ENCODE measurements at regions of chr1 and their contacts with region 1.

Region 1: GRCh38 chr1:40338745-40339424 is 21.8 kb upstream of the COL9A2 start:
- DNase-seq: peak; percentile 92
- ATAC-seq: peak; percentile 91
- H3K4me3 Mint-ChIP-seq: peak overlapping the region; percentile 32
- H3K27ac Mint-ChIP-seq: peak overlapping the region; percentile 59
- H3K4me1 Mint-ChIP-seq: peaks cover 45% of the 10 kb centered on the region
- H3K27me3 Mint-ChIP-seq: no peaks in the 10 kb centered on the region

Region 2: DNA sequence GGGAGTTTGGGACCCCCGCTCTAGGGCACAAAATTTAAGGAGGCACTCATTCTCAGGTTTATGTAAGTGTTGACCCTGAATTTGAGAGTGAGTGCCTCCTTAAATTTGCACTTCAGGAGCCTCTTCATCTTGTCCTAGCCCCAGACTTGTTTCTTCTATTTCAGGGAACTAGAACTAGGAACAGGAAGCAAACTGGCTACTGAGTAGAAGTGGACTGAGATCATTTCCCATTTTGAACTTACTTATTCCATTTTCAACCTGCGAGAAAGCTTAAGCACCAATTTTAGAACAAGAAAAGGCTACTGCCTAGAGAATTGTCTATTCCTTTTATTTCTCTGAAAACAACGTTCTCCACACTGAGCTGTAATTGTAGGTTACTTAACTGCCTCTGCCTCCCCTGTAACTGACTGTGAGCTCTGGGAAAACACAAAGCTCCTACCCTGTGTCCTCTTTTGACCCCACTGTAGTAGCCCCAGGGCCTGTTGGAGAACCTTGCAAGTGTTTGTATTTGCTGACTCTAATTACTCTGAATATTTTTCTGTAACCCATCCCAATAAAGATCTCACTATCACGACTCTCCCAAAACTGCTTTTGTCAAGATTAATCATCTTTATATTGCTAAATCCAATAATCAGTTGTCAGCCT is 244.3 kb before region 1 on chr1:
- CTCF ChIA-PET with region 1: interaction called, 11 read pairs
- POLR2A ChIA-PET with region 1: no interaction called
- DNase-seq: no peak
- ATAC-seq: no peak
- H3K4me3 Mint-ChIP-seq: no peak overlapping the region
- H3K27ac Mint-ChIP-seq: no peak overlapping the region
- H3K4me1 Mint-ChIP-seq: peaks cover 35% of the 10 kb centered on the region
- H3K27me3 Mint-ChIP-seq: peaks cover 2% of the 10 kb centered on the region

Region 3: GRCh38 chr1:40161125-40161887 is 177.6 kb before region 1 on chr1 and contains the start of gene RLF:
- CTCF ChIA-PET with region 1: interaction called, 262 read pairs
- POLR2A ChIA-PET with region 1: interaction called, 4 read pairs
- DNase-seq: peak; percentile 96
- ATAC-seq: peak; percentile 96
- H3K4me3 Mint-ChIP-seq: no peak within 1 kb of the TSS
- H3K27ac Mint-ChIP-seq: peak within 1 kb of the TSS; percentile 36
- H3K4me1 Mint-ChIP-seq: peaks cover 15% of the 10 kb centered on the region
- H3K27me3 Mint-ChIP-seq: no peaks in the 10 kb centered on the region
- total RNA-seq, gene RLF: 20.4 to 22.3 TPM

Region 4: DNA sequence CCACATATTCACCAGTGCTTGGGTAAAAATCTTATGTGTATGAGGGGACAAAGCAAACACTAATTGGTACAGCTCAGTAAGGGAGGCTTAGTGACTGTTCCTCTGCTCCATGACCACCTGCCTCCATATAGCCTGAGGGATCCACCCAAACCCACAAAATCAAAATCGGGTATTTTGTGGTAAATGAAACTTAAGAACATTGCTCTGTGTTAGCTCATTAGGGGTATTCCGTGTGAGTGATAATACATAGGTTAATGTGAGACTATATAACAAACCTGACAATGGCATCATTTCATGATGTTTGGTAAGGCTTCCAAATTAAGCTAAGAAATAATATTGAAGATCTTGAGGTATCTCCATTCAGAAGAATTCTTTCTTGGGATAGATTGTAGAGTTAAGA is 47.6 kb before region 1 on chr1:
- CTCF ChIA-PET with region 1: interaction called, 27 read pairs
- POLR2A ChIA-PET with region 1: no interaction called
- DNase-seq: no peak
- ATAC-seq: no peak
- H3K4me3 Mint-ChIP-seq: no peak overlapping the region
- H3K27ac Mint-ChIP-seq: no peak overlapping the region
- H3K4me1 Mint-ChIP-seq: peaks cover 6% of the 10 kb centered on the region
- H3K27me3 Mint-ChIP-seq: no peaks in the 10 kb centered on the region

Region 5: DNA sequence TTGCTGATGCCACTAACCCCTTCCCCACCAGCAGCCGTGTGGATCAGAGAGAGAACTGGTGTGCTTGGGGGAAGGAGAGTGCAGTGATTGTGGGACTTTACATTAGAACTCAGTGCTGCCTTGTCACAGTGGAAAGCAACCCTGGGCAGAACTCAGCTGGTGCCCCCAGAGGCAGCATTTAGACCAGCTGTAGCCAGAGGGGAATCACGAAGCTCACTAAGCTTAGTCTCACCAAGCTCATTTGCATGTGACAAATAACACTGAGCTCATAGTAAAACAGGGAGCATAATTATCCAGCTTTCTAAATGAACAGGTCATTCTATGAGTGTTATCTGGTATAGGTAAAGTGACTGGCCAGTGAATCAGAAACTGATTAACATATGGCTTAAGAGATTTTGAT is 24.8 kb after region 1 on chr1:
- CTCF ChIA-PET with region 1: interaction called, 26 read pairs
- POLR2A ChIA-PET with region 1: no interaction called
- DNase-seq: no peak
- ATAC-seq: no peak
- H3K4me3 Mint-ChIP-seq: no peak overlapping the region
- H3K27ac Mint-ChIP-seq: no peak overlapping the region
- H3K4me1 Mint-ChIP-seq: peaks cover 5% of the 10 kb centered on the region
- H3K27me3 Mint-ChIP-seq: no peaks in the 10 kb centered on the region

Region 6: DNA sequence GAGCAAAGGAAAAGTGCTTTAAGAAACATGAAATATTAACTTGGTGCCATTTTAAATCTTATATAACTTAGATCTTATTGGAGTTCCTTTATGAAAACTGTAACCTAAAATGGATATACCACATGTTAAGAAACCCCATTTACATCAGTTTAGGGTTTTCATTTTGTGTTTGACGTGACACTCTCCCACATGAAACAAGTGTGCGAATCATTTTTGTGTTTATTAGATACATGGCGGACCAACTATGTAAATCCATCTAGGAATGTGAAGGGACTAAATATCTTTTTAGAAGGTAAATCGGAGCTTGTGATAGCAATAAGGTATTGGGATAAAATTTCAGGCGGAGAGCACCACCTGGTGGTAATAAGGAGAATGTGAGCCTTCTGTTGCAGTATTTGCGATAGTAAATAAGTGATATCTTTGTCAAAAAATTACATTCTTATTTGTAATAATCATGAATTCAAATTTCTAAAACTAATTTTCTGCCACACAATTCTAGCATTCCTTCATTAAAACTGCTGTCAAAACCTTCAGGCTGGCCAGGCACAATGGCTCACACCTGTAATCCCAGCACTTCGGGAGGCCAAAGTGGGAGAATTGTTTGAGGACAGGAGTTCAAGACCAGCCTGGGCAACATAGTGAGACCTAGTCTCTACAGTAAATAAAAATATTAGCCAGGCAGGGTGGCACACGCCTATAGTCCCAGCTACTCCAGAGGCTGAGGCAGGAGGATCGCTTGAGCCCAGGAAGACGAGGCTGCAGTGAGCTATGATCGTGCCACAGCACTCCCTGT is 66.0 kb after region 1 on chr1:
- CTCF ChIA-PET with region 1: interaction called, 200 read pairs
- POLR2A ChIA-PET with region 1: interaction called, 7 read pairs
- DNase-seq: peak; percentile 67
- ATAC-seq: peak; percentile 57
- H3K4me3 Mint-ChIP-seq: no peak overlapping the region
- H3K27ac Mint-ChIP-seq: peak overlapping the region; percentile 75
- H3K4me1 Mint-ChIP-seq: peaks cover 52% of the 10 kb centered on the region
- H3K27me3 Mint-ChIP-seq: no peaks in the 10 kb centered on the region

Measured in activated CD8-positive, alpha-beta T cell treated with anti-CD3 and anti-CD28 coated beads, Interleukin-2, amount 10 ng/mL, durations not matched to agents 7 days and 5 days (primary cell).